ENCODE measurements at regions of chr3 and their contacts with region 1.

Region 1: GRCh38 chr3:81760924-81761903 is at the start of gene GBE1:
- H3K4me3 Mint-ChIP-seq: peak within 1 kb of the TSS; percentile 88
- H3K27ac Mint-ChIP-seq: peak within 1 kb of the TSS; percentile 98
- H3K4me1 Mint-ChIP-seq: peaks cover 26% of the 10 kb centered on the region
- H3K27me3 Mint-ChIP-seq: no peaks in the 10 kb centered on the region

Region 2: GRCh38 chr3:81308306-81308705 is 452.9 kb before region 1 on chr3:
- intact Hi-C with region 1: no loop called
- H3K4me3 Mint-ChIP-seq: no peak overlapping the region
- H3K27ac Mint-ChIP-seq: no peak overlapping the region
- H3K4me1 Mint-ChIP-seq: no peaks in the 10 kb centered on the region
- H3K27me3 Mint-ChIP-seq: no peaks in the 10 kb centered on the region

Region 3: GRCh38 chr3:81723732-81724313 is 37.4 kb before region 1 on chr3:
- intact Hi-C with region 1: no loop called
- H3K4me3 Mint-ChIP-seq: no peak overlapping the region
- H3K27ac Mint-ChIP-seq: no peak overlapping the region
- H3K4me1 Mint-ChIP-seq: peaks cover 7% of the 10 kb centered on the region
- H3K27me3 Mint-ChIP-seq: no peaks in the 10 kb centered on the region

Region 4: DNA sequence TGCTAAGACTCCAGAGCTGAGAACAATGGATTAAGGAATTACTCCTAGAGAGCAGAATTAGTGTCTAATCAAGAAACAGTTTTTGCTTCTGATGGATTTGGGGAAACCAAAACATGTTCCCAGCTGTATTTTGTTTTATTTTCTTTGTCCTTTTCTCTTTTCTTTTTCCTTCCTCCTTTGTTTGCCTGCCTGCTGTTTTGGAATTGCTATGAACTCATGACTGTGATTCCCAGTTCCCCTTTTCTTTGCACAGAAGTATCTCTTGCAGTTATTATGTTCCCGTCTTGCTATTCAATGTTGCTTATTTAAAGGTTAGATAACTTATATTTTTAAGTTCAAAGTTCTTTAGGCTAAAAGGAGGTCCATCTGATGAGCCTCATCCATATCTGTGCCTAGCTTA is 77.2 kb after region 1 on chr3:
- intact Hi-C with region 1: loop called (anchors 5 kb)
- H3K4me3 Mint-ChIP-seq: peak overlapping the region; percentile 25
- H3K27ac Mint-ChIP-seq: peak overlapping the region; percentile 83
- H3K4me1 Mint-ChIP-seq: peaks cover 15% of the 10 kb centered on the region
- H3K27me3 Mint-ChIP-seq: no peaks in the 10 kb centered on the region

Measured in dendritic cell treated with granulocyte-macrophage colony-stimulating factor and Interleukin-4, amounts not matched to agents 40 ng/mL and 50 ng/mL, for 4 days (primary cell).